Natural killer cell (primary cell): ENCODE measurements at regions of chr5 and their contacts with region 1.

Region 1: GRCh38 chr5:180071531-180072255 is at the start of gene RNF130:
- DNase-seq: peak; percentile 87 to 90
- ATAC-seq: peak; percentile 81 to 91 (median 84)
- H3K4me3 ChIP-seq: peak within 1 kb of the TSS; percentile 70
- H3K4me3 Mint-ChIP-seq: peak within 1 kb of the TSS; percentile 90
- H3K27ac ChIP-seq: peak within 1 kb of the TSS; percentile 87
- H3K27ac Mint-ChIP-seq: peak within 1 kb of the TSS; percentile 68 to 82
- H3K4me1 ChIP-seq: peaks cover 19% of the 10 kb centered on the region
- H3K4me1 Mint-ChIP-seq: peaks cover 30 to 41% of the 10 kb centered on the region in 2 donors
- H3K27me3 ChIP-seq: no peaks in the 10 kb centered on the region
- H3K27me3 Mint-ChIP-seq: peaks cover 12 to 22% of the 10 kb centered on the region in 2 donors
- CTCF ChIP-seq: no peak
- total RNA-seq, gene RNF130: 24.4 to 35.0 (median 25.5) TPM

Region 2: GRCh38 chr5:179550511-179551230 is 521.0 kb before region 1 on chr5 and contains the start of gene RUFY1:
- intact Hi-C with region 1: loop called (anchors 5 kb)
- DNase-seq: peak; percentile 88 to 89
- ATAC-seq: peak; percentile 83 to 93 (median 85)
- H3K4me3 ChIP-seq: peak within 1 kb of the TSS; percentile 93
- H3K4me3 Mint-ChIP-seq: peak within 1 kb of the TSS; percentile 97
- H3K27ac ChIP-seq: peak within 1 kb of the TSS; percentile 79
- H3K27ac Mint-ChIP-seq: peak within 1 kb of the TSS; percentile 93 to 95
- H3K4me1 ChIP-seq: peaks cover 22% of the 10 kb centered on the region
- H3K4me1 Mint-ChIP-seq: peaks cover 11 to 20% of the 10 kb centered on the region in 2 donors
- H3K27me3 ChIP-seq: no peaks in the 10 kb centered on the region
- H3K27me3 Mint-ChIP-seq: no peaks in the 10 kb centered on the region
- CTCF ChIP-seq: no peak
- total RNA-seq, gene RUFY1: 40.4 to 48.7 (median 46.6) TPM

Region 3: GRCh38 chr5:180007582-180007981 is 64.1 kb before region 1 on chr5:
- intact Hi-C with region 1: loop called (anchors 5 kb)
- DNase-seq: no peak
- ATAC-seq: peak; percentile 15 to 43 (median 39)
- H3K4me3 ChIP-seq: no peak overlapping the region
- H3K4me3 Mint-ChIP-seq: peak overlapping the region; percentile 90
- H3K27ac ChIP-seq: peak overlapping the region; percentile 63
- H3K27ac Mint-ChIP-seq: peak overlapping the region; percentile 86 to 94
- H3K4me1 ChIP-seq: peaks cover 19% of the 10 kb centered on the region
- H3K4me1 Mint-ChIP-seq: peaks cover 37 to 43% of the 10 kb centered on the region in 2 donors
- H3K27me3 ChIP-seq: no peaks in the 10 kb centered on the region
- H3K27me3 Mint-ChIP-seq: no peaks in the 10 kb centered on the region
- CTCF ChIP-seq: no peak

Region 4: GRCh38 chr5:180084688-180085561 is 13.2 kb after region 1 on chr5:
- intact Hi-C with region 1: loop called (anchors 1 kb)
- DNase-seq: peak in 1 of 2 donors; percentile 30
- ATAC-seq: peak; percentile 53 to 61 (median 55)
- H3K4me3 ChIP-seq: no peak overlapping the region
- H3K4me3 Mint-ChIP-seq: peak overlapping the region; percentile 28
- H3K27ac ChIP-seq: no peak overlapping the region
- H3K27ac Mint-ChIP-seq: no peak overlapping the region
- H3K4me1 ChIP-seq: peaks cover 45% of the 10 kb centered on the region
- H3K4me1 Mint-ChIP-seq: peaks cover 30 to 52% of the 10 kb centered on the region in 2 donors
- H3K27me3 ChIP-seq: peaks cover 14% of the 10 kb centered on the region
- H3K27me3 Mint-ChIP-seq: peaks cover 23 to 26% of the 10 kb centered on the region in 2 donors
- CTCF ChIP-seq: no peak

Region 5: DNA sequence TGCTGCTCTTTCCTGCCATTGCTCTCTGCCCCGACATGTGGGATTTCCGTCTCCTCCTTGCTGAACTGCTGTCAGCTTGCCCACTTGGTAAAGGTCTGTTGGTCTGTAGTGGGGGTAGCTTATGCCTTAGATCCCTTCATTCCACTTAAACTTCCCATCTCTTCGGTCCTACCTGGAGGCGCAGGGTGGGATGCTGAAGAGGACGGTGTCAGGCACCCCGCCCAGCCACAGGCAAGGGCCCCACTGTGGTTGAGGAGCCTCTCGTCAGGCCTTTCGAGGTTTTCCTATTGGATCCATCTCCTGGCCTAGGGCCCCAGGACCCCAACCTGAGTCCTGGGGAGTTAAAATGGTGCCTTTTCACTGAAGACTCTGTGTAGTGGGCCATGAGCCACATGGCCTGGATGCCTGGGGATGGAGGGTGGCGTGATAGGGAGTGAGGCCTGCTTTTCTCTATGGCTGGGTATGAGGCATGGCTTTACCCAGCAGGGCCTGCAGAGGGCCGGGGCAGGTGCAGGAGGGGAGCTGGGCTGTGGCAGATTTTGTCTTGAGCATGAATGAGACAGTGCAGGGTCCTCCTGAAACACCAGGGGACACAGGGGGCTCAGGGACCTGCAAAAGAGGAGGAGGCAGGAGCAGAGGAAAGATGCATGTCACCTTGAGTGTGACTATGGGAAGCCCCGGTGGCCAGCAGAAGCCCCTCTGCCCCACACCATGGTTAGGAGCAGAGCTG is 25.6 kb after region 1 on chr5:
- intact Hi-C with region 1: no loop called
- DNase-seq: no peak
- ATAC-seq: no peak
- H3K4me3 ChIP-seq: no peak overlapping the region
- H3K4me3 Mint-ChIP-seq: peak overlapping the region; percentile 15
- H3K27ac ChIP-seq: no peak overlapping the region
- H3K27ac Mint-ChIP-seq: no peak overlapping the region
- H3K4me1 ChIP-seq: no peaks in the 10 kb centered on the region
- H3K4me1 Mint-ChIP-seq: no peaks in the 10 kb centered on the region
- H3K27me3 ChIP-seq: peaks cover 2% of the 10 kb centered on the region
- H3K27me3 Mint-ChIP-seq: peaks cover 25 to 31% of the 10 kb centered on the region in 2 donors
- CTCF ChIP-seq: no peak